ENCODE measurements at regions of chr2 and their contacts with region 1.

Region 1: GRCh38 chr2:36376319-36376765 is 20.8 kb downstream of the CRIM1 start:
- DNase-seq: no peak
- H3K4me3 ChIP-seq: peak overlapping the region in 1 of 4 donors; percentile 1
- H3K27ac ChIP-seq: peak overlapping the region; percentile 8 to 61 (median 18)
- H3K4me1 ChIP-seq: peaks cover 71 to 91% (median 82%) of the 10 kb centered on the region in 4 donors
- H3K27me3 ChIP-seq: no peaks in the 10 kb centered on the region
- CTCF ChIP-seq: no peak
- EP300 ChIP-seq: no peak
- POLR2A ChIP-seq: no peak

Region 2: GRCh38 chr2:36173760-36174404 is 202.5 kb before region 1 on chr2:
- intact Hi-C with region 1: no loop called
- DNase-seq: no peak
- H3K4me3 ChIP-seq: no peak overlapping the region
- H3K27ac ChIP-seq: no peak overlapping the region
- H3K4me1 ChIP-seq: no peaks in the 10 kb centered on the region
- H3K27me3 ChIP-seq: no peaks in the 10 kb centered on the region
- CTCF ChIP-seq: no peak
- EP300 ChIP-seq: no peak
- POLR2A ChIP-seq: no peak

Region 3: GRCh38 chr2:36427790-36428243 is 51.5 kb after region 1 on chr2:
- intact Hi-C with region 1: loop called (anchors 10 kb)
- DNase-seq: no peak
- H3K4me3 ChIP-seq: no peak overlapping the region
- H3K27ac ChIP-seq: peak overlapping the region in 1 of 4 donors; percentile 5
- H3K4me1 ChIP-seq: peaks cover 44 to 57% (median 54%) of the 10 kb centered on the region in 4 donors
- H3K27me3 ChIP-seq: no peaks in the 10 kb centered on the region
- CTCF ChIP-seq: no peak
- EP300 ChIP-seq: no peak
- POLR2A ChIP-seq: no peak

Region 4: DNA sequence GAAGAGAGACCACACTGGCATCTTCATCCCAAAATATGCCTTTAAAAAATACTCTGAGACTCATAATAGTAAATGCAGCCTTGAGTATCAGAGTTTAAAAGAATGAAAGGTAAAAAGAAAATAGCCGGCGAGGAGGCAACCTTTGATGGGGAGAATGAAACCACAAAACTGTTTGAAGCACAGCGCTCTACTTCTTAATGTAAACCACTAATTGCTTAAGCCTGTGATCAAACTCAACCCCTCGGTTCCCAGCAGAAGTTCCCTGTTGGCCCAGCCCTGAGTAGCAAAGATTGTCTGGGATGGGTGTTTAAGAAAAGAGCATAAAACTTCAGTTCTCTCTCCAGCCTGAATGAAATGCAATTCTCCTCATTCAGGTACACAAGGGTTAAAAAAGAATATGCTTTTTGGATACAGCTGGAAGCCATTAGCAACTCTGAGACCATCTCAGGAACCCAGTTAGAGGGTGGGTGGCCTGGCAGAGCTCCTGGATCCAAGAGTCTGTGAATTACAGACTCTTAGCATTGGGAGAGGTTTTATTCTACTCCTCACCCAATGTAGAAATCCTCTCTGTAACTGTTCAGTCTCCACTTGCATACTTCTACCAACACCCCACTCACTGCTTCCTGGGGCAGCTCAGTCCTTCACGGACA is 365.0 kb after region 1 on chr2:
- intact Hi-C with region 1: no loop called
- DNase-seq: no peak
- H3K4me3 ChIP-seq: no peak overlapping the region
- H3K27ac ChIP-seq: no peak overlapping the region
- H3K4me1 ChIP-seq: no peaks in the 10 kb centered on the region
- H3K27me3 ChIP-seq: no peaks in the 10 kb centered on the region
- CTCF ChIP-seq: no peak
- EP300 ChIP-seq: no peak
- POLR2A ChIP-seq: no peak